Activated T-helper 1 cell treated with anti-CD3 and anti-CD28 coated beads, Interleukin-12 subunit alpha, Interleukin-12 subunit beta, Interleukin-2, Interleukin-4 antibody, amounts not matched to agents 30 ng/mL and 10 ng/mL and 1 ng/mL, durations not matched to agents 14 hours and 24 hours and 36 hours (primary cell): ENCODE measurements at regions of chr16 and their contacts with region 1.

Region 1: GRCh38 chr16:84738255-84739038 is 38.6 kb downstream of the USP10 start:
- DNase-seq: peak; percentile 62
- H3K4me3 Mint-ChIP-seq: peak overlapping the region; percentile 25
- H3K27ac Mint-ChIP-seq: no peak overlapping the region
- H3K4me1 Mint-ChIP-seq: peaks cover 59% of the 10 kb centered on the region
- H3K27me3 Mint-ChIP-seq: no peaks in the 10 kb centered on the region

Region 2: DNA sequence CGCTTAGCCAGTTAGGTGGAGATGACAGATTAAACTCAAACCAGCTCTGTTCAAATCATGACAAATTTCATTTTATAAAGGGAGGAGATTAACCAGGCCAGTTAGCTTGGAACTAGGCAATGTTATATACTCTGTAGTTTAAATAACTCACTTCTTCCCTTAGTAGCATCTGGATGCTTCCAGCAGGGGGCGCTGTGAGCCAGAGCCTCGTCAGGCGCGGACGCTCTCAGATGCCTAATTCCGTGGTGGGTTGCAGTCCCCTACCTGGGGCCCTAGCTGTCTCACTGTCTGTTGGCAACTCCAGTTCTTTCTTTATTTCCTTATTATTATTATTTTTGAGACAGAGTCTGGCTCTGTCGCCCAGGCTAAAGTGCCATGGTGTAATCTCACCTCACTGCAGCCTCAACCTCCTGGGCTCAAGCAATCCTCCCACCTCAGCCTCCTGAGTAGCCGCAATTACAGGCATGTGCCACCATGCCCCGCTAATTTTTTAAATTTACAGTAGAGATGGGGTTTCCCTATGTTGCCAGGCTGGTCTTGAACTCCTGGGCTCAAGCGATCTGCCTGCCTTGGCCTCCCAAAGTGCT is 461.1 kb before region 1 on chr16:
- intact Hi-C with region 1: loop called (anchors 10 kb)
- DNase-seq: peak; percentile 53
- H3K4me3 Mint-ChIP-seq: no peak overlapping the region
- H3K27ac Mint-ChIP-seq: no peak overlapping the region
- H3K4me1 Mint-ChIP-seq: no peaks in the 10 kb centered on the region
- H3K27me3 Mint-ChIP-seq: no peaks in the 10 kb centered on the region

Region 3: GRCh38 chr16:84449171-84450140 is 289.0 kb before region 1 on chr16:
- intact Hi-C with region 1: no loop called
- DNase-seq: no peak
- H3K4me3 Mint-ChIP-seq: no peak overlapping the region
- H3K27ac Mint-ChIP-seq: no peak overlapping the region
- H3K4me1 Mint-ChIP-seq: no peaks in the 10 kb centered on the region
- H3K27me3 Mint-ChIP-seq: no peaks in the 10 kb centered on the region

Region 4: DNA sequence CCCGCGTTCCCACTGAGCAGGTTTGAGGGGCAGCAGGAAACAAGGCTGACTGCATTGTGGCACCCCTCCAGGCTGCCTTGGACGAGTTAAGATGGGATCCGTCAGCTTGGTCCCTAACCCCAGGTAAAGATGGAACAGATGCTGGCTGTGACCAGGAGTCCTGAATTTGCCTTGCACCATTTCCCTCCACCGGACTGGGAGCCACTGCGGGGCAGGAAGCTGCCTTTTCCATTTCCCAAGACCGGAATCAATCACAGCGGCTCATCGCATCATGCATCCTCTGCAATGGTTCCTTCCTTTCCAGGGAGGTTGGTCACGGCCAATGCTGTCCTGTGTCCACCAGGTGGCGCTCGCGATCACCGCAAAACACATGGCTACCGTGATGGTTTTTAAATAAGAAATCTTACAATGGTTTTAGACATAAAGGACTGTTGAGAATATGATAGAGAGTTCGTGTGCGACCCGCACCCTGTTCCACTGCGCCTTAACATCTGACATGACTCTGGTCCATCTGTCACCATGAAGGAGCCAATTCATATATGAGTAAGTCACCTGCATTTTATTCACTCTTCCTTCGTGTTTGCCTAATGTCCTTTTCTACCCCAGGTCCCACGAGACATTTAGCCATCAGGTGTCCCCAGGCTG is 227.1 kb before region 1 on chr16:
- intact Hi-C with region 1: loop called (anchors 1 kb)
- DNase-seq: peak; percentile 73
- H3K4me3 Mint-ChIP-seq: peak overlapping the region; percentile 38
- H3K27ac Mint-ChIP-seq: peak overlapping the region; percentile 49
- H3K4me1 Mint-ChIP-seq: peaks cover 72% of the 10 kb centered on the region
- H3K27me3 Mint-ChIP-seq: no peaks in the 10 kb centered on the region

Region 5: GRCh38 chr16:84672276-84673202 is 65.9 kb before region 1 on chr16:
- intact Hi-C with region 1: loop called (anchors 1 kb)
- DNase-seq: peak; percentile 66
- H3K4me3 Mint-ChIP-seq: no peak overlapping the region
- H3K27ac Mint-ChIP-seq: no peak overlapping the region
- H3K4me1 Mint-ChIP-seq: peaks cover 8% of the 10 kb centered on the region
- H3K27me3 Mint-ChIP-seq: peaks cover 14% of the 10 kb centered on the region

Region 6: DNA sequence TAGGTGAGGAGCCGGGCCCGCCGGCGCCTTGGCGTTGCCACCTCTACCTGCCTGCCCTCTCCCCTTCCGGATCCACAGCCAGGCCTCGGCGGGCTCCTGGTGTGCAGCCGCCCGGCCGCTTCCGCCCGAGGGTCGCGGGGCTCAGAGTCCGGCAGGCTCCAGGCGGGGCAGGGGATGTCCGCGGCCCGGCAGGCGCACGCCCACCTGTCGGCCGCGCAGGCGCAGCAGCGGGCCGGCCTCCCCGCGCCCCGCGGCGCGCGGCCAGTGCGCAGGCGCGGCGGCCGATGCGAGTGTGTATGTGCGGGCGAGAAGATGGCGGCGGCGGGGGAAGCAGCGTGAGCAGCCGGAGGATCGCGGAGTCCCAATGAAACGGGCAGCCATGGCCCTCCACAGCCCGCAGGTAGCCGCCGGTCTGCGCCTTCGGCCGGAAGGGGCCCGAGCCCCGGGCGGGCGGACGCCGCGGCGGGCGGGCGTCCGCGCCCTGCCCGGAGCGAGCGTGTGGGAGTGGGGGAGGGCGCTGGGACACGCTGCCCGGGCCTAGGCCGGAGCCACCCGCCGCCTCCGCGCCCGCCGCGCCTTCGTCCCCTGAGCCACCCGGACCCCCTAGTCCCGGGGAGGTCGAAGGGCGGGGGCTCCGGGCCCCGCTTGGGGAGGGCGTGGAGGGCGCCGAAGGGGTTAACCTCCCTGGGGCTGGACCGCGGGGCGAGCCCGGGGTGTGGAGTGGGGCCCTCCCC is 38.6 kb before region 1 on chr16 and contains the start of gene USP10:
- intact Hi-C with region 1: loop called (anchors 5 kb)
- DNase-seq: peak; percentile 84
- H3K4me3 Mint-ChIP-seq: peak within 1 kb of the TSS; percentile 99
- H3K27ac Mint-ChIP-seq: peak within 1 kb of the TSS; percentile 96
- H3K4me1 Mint-ChIP-seq: peaks cover 38% of the 10 kb centered on the region
- H3K27me3 Mint-ChIP-seq: peaks cover 4% of the 10 kb centered on the region
- total RNA-seq, gene USP10: 153 and 159 TPM in 2 replicates

Region 7: GRCh38 chr16:84726079-84726668 is 12.3 kb before region 1 on chr16:
- intact Hi-C with region 1: loop called (anchors 1 kb)
- DNase-seq: peak; percentile 62
- H3K4me3 Mint-ChIP-seq: peak overlapping the region; percentile 45
- H3K27ac Mint-ChIP-seq: no peak overlapping the region
- H3K4me1 Mint-ChIP-seq: peaks cover 79% of the 10 kb centered on the region
- H3K27me3 Mint-ChIP-seq: no peaks in the 10 kb centered on the region

Region 8: DNA sequence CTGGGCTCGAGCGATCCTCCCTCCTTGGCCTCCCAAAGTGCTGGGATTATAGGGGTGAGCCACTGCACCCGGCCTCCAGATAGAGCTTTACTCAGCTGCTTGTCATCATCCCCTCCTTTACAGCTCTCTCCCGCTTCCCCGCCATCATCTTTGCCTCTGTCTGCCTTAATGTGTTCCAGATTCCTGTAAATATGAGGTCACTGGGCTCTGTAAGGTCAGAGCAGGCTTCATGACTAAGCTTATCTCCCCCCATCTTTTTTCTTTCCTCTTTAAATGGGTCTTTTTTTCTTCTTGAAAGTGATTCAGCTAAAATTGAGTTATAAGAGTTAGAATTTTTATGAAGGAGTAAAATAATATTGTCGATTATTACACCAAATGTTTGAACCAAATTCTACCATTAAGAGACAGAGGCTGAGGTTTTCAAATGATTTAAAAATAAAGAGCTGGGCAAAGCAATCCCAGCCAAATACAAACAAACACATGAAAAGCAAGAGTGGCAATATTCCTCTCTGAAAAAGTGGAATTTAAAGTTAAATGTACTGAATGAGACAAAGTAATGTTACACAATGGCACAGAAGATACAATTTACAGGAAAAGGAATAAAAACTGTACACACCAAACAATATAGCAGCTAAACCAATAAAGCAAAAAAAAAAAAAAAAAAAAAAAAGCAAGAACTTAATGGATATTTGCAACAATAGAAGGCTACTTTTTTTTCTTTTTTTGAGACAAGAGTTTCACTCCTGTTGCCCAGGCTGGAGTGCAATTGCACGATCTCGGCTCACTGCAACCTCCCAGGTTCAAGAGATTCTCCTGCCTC is 143.5 kb after region 1 on chr16:
- intact Hi-C with region 1: no loop called
- DNase-seq: no peak
- H3K4me3 Mint-ChIP-seq: no peak overlapping the region
- H3K27ac Mint-ChIP-seq: no peak overlapping the region
- H3K4me1 Mint-ChIP-seq: no peaks in the 10 kb centered on the region
- H3K27me3 Mint-ChIP-seq: peaks cover 10% of the 10 kb centered on the region